ENCODE measurements at regions of chr1 and their contacts with region 1.

Region 1: DNA sequence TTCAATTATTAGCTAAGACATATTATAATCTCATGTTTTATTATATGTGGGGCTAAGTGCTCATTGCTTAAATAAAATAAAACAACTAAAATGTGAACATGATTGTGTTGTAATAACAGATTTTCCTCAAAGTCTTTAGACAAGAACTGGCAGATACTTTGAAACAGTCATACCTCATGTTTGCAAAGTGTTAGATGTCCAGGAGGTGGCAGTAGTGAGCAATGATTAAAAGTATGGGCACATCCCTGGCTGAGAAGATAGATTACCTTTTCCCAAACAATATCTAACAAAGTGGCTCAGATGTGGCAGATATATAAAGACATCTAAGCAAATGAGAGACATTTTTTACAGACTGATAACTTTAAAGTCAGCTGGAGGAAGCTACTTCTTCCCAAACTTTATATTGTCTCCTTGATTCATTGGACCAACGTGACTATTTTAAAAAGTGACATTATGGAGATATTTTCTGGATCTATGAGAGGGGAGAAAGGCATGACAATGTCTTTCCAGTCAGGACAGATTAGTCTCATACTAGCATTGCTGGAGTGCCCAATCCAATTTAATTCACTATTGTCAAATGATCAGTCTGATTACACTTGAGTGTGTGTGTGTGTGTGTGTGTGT is 269.8 kb downstream of the S1PR1 start:
- DNase-seq: peak; percentile 75
- H3K4me3 ChIP-seq: no peak overlapping the region
- H3K27ac ChIP-seq: no peak overlapping the region
- H3K4me1 ChIP-seq: no peaks in the 10 kb centered on the region
- H3K27me3 ChIP-seq: no peaks in the 10 kb centered on the region
- CTCF ChIP-seq: peak; percentile 82

Region 2: GRCh38 chr1:101257500-101258325 is 248.9 kb before region 1 on chr1:
- CTCF ChIA-PET with region 1: no interaction called
- POLR2A ChIA-PET with region 1: no interaction called
- intact Hi-C with region 1: no loop called
- DNase-seq: no peak
- H3K4me3 ChIP-seq: no peak overlapping the region
- H3K27ac ChIP-seq: no peak overlapping the region
- H3K4me1 ChIP-seq: no peaks in the 10 kb centered on the region
- H3K27me3 ChIP-seq: no peaks in the 10 kb centered on the region
- CTCF ChIP-seq: no peak

Region 3: GRCh38 chr1:102315096-102315495 is 808.4 kb after region 1 on chr1:
- CTCF ChIA-PET with region 1: no interaction called
- POLR2A ChIA-PET with region 1: no interaction called
- intact Hi-C with region 1: no loop called
- DNase-seq: no peak
- H3K4me3 ChIP-seq: no peak overlapping the region
- H3K27ac ChIP-seq: no peak overlapping the region
- H3K4me1 ChIP-seq: peaks cover 3% of the 10 kb centered on the region
- H3K27me3 ChIP-seq: no peaks in the 10 kb centered on the region
- CTCF ChIP-seq: no peak

Region 4: GRCh38 chr1:102970498-102971078 is 1463.9 kb after region 1 on chr1:
- CTCF ChIA-PET with region 1: no interaction called
- POLR2A ChIA-PET with region 1: no interaction called
- intact Hi-C with region 1: loop called (anchors 10 kb)
- DNase-seq: peak; percentile 82
- H3K4me3 ChIP-seq: no peak overlapping the region
- H3K27ac ChIP-seq: no peak overlapping the region
- H3K4me1 ChIP-seq: no peaks in the 10 kb centered on the region
- H3K27me3 ChIP-seq: no peaks in the 10 kb centered on the region
- CTCF ChIP-seq: peak; percentile 76